ENCODE measurements at regions of chr20 and their contacts with region 1.

Region 1: DNA sequence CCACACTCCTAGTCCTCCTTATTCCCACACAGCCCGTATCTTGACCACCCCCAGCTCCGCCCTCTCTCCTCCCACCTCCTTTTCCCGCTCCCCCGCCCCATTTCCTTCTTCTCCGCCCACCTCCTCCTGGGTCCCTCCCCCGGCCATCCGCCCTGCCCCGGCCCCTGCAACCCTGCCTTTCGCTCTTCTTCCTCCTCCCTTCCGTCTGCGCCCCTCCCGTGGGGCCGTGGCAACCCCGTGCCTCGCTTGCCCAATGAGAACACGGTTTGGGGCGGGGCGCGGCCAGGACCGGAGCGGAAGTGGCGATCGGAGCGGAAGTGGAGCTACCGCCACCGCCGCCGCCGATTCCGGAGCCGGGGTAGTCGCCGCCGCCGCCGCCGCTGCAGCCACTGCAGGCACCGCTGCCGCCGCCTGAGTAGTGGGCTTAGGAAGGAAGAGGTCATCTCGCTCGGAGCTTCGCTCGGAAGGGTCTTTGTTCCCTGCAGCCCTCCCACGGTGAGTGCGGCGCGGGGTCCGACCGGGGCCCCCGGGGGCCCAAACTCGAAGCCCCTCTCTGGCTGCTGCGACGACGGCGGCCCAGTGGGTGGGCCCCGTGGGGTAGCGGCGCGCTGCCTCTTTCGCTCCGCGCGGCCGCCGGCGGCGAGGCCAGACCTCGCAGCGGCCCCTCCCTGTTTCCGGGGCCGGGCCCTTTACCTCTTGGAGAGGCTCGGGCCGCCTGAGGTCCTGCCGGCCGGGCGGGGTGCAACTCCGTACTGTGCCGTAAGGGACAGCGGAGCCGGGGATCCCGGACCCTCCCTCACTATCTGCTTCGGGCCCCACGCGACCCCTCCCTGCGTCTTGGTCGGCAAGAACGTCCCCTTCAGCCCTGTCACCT is at the start of gene YWHAB:
- DNase-seq: peak; percentile 95 to 98
- ATAC-seq: peak; percentile 91 to 99 (median 94)
- H3K4me3 ChIP-seq: peak within 1 kb of the TSS; percentile 75
- H3K4me3 Mint-ChIP-seq: peak within 1 kb of the TSS; percentile 98
- H3K27ac ChIP-seq: peak within 1 kb of the TSS; percentile 86
- H3K27ac Mint-ChIP-seq: peak within 1 kb of the TSS; percentile 93 to 97
- H3K4me1 ChIP-seq: peaks cover 19% of the 10 kb centered on the region
- H3K4me1 Mint-ChIP-seq: peaks cover 48 to 62% of the 10 kb centered on the region in 2 donors
- H3K27me3 ChIP-seq: no peaks in the 10 kb centered on the region
- H3K27me3 Mint-ChIP-seq: no peaks in the 10 kb centered on the region
- CTCF ChIP-seq: no peak
- total RNA-seq, gene YWHAB: 137 to 199 (median 179) TPM

Region 2: GRCh38 chr20:44210422-44211176 is 675.0 kb before region 1 on chr20 and contains the start of gene OSER1:
- intact Hi-C with region 1: loop called (anchors 2 kb)
- DNase-seq: peak; percentile 98 to 99
- ATAC-seq: peak; percentile 81 to 96 (median 84)
- H3K4me3 ChIP-seq: peak within 1 kb of the TSS; percentile 81
- H3K4me3 Mint-ChIP-seq: peak within 1 kb of the TSS; percentile 98
- H3K27ac ChIP-seq: peak within 1 kb of the TSS; percentile 89
- H3K27ac Mint-ChIP-seq: peak within 1 kb of the TSS; percentile 92 to 97
- H3K4me1 ChIP-seq: peaks cover 25% of the 10 kb centered on the region
- H3K4me1 Mint-ChIP-seq: peaks cover 52 to 56% of the 10 kb centered on the region in 2 donors
- H3K27me3 ChIP-seq: no peaks in the 10 kb centered on the region
- H3K27me3 Mint-ChIP-seq: no peaks in the 10 kb centered on the region
- CTCF ChIP-seq: no peak
- total RNA-seq, gene OSER1: 72.3 to 93.9 (median 78.3) TPM

Region 3: GRCh38 chr20:45011108-45011526 is 125.5 kb after region 1 on chr20:
- intact Hi-C with region 1: loop called (anchors 10 kb)
- DNase-seq: peak in 1 of 2 donors; percentile 75
- ATAC-seq: peak; percentile 78 to 87 (median 85)
- H3K4me3 ChIP-seq: no peak overlapping the region
- H3K4me3 Mint-ChIP-seq: no peak overlapping the region
- H3K27ac ChIP-seq: no peak overlapping the region
- H3K27ac Mint-ChIP-seq: peak overlapping the region; percentile 24 to 63
- H3K4me1 ChIP-seq: no peaks in the 10 kb centered on the region
- H3K4me1 Mint-ChIP-seq: peaks cover 57 to 59% of the 10 kb centered on the region in 2 donors
- H3K27me3 ChIP-seq: no peaks in the 10 kb centered on the region
- H3K27me3 Mint-ChIP-seq: no peaks in the 10 kb centered on the region
- CTCF ChIP-seq: peak; percentile 72

Measured in natural killer cell (primary cell).